ENCODE measurements at regions of chr3 and their contacts with region 1.

Region 1: DNA sequence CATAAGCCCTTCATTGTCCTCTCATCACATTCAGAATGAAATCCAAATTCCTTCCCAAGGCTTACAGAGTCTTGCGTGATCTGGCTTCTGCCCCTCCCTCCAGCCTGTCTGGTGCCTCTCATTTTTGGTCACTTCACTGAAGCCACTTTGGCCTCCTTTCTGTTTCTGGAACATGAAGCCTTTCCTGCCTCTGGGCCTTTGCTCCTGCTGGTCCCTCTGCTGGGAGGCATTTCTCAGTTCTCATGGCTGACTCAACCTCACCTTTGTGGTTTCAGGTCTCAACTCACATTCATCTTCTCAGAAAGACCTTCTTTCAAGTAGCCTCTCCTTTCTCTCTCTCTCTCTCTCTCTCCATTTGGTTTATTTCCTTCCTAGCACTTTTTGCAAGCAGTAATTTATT is 43.9 kb upstream of the BHLHE40 start:
- DNase-seq: no peak
- ATAC-seq: no peak
- H3K4me3 ChIP-seq: no peak overlapping the region
- H3K27ac ChIP-seq: no peak overlapping the region
- H3K4me1 ChIP-seq: no peaks in the 10 kb centered on the region
- H3K27me3 ChIP-seq: no peaks in the 10 kb centered on the region
- CTCF ChIP-seq: no peak

Region 2: DNA sequence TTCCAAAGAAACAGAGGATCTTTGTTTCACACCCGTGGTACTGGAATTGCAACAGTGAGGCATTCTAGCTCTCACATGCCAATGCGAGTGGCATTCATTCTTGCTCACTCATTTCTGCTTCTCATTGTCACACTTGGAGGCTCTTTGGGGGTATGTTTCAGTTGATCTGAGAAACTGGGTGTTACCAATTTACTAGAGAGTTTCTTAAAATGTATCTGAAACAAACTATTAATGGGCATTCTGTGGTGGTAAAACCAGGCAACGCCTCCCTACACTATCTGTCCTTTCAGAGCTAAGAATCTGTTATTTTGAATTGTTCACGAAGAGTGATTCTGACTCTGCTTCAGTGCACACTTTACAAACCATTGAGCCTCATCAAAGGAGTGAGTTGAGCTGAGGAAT is 96.7 kb before region 1 on chr3:
- intact Hi-C with region 1: no loop called
- DNase-seq: no peak
- ATAC-seq: no peak
- H3K4me3 ChIP-seq: no peak overlapping the region
- H3K27ac ChIP-seq: no peak overlapping the region
- H3K4me1 ChIP-seq: peaks cover 0 to 23% (median 0%) of the 10 kb centered on the region in 9 donors
- H3K27me3 ChIP-seq: no peaks in the 10 kb centered on the region
- CTCF ChIP-seq: no peak

Region 3: GRCh38 chr3:4855676-4856075 is 79.7 kb before region 1 on chr3:
- intact Hi-C with region 1: loop called in 1 of 10 experiments (anchors 2 kb)
- DNase-seq: no peak
- ATAC-seq: peak in 3 of 8 donors; percentile 73 to 87 (median 79)
- H3K4me3 ChIP-seq: no peak overlapping the region
- H3K27ac ChIP-seq: peak overlapping the region in 1 of 10 donors; percentile 16
- H3K4me1 ChIP-seq: peaks cover 0 to 34% (median 0%) of the 10 kb centered on the region in 9 donors
- H3K27me3 ChIP-seq: no peaks in the 10 kb centered on the region
- CTCF ChIP-seq: no peak

Region 4: DNA sequence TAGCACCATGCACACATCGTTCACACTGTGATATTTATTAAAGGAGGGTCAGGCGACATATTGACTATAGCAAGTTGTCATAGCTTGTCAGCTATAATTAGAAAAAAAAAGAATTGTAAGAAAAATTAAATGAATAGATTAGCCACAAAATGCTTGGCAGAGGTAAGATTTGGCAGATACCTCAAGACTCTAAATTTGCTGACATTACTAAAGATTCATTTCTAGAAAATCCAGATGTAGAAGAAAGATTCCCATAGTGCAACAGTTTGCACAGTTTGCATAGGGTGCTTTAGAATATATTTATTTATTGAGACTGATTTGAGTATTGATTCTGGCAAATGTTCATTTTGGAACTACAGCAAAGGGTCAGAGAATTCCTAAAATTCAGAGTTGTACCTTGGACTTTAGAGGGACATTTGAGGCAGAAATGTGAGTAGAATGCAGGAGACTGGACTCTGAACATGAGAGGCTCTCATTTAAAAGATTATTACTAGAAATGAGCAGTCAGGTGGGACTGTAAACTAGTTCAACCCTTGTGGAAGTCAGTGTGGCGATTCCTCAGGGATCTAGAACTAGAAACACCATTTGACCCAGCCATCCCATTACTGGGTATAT is 58.1 kb before region 1 on chr3:
- intact Hi-C with region 1: loop called in 1 of 10 experiments (anchors 10 kb)
- DNase-seq: no peak
- ATAC-seq: no peak
- H3K4me3 ChIP-seq: no peak overlapping the region
- H3K27ac ChIP-seq: no peak overlapping the region
- H3K4me1 ChIP-seq: no peaks in the 10 kb centered on the region
- H3K27me3 ChIP-seq: no peaks in the 10 kb centered on the region
- CTCF ChIP-seq: no peak